Posterior vena cava (tissue), 2 donors: ENCODE measurements at regions of chr3 and their contacts with region 1.

Region 1: DNA sequence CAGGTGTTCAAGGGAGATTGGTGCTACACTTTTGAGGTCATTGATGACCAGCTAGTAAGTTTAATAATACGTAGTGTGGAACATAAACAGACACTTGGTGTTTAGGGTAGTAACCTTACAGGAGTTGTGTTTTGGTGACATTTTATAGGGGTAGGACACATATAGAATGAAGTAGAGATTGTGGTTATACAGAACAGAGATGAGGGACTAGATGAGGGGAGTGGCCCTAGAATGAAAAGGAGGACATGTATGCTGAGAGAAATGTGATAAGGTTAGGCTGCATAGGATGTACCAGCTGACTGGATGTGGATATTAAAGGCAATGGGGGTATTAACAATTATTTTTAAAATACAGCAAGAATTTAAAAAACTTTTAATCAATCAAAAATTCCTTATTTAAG is 8.0 kb downstream of the MBNL1 start:
- DNase-seq: no peak

Region 2: GRCh38 chr3:152350139-152350538 is 73.5 kb after region 1 on chr3:
- intact Hi-C with region 1: loop called in 1 of 2 experiments (anchors 2 kb)
- DNase-seq: no peak